Left lung (tissue), 14 donors: ENCODE measurements at regions of chrX and their contacts with region 1.

Region 1: DNA sequence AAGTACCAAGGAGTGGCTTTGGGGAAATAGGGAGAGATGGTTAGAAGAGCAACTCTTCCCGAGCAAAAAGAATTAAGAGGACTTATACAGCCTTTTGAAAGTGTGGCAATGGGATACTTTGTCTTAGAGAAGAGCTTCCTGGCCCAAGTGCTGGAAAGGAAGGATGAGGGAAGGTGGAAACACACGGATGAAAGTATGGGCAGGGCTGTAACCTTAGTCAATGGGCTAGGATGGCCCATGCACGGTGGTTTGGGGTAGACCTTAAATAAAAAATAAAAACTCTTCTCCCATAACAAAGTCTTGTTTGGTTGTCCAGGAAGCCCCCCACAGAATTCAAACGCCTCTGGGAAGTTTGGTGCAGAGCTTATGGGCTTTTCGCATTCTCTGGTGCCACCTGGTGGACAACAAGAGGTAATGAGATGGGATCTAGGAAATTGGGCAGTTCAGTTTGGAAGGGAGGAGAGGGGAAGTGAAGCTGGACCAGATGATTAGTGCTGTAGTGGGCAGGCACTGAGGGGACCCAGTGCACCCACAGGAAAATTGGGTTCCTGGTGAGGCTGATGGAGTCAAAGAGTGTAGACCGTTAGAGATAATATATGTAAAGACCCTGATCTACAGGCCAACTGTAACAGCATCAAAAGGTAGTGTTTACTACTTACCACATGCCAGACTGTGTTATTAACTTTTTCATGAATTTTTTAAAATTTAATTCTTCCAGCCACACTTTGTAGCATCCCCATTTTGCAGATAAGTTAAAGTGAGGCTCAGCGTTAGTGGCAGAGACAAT is 13.8 kb upstream of the ENOX2 start:
- DNase-seq: peak in 3 of 4 donors; percentile 32 to 51 (median 42)
- ATAC-seq: peak; percentile 84
- H3K4me3 ChIP-seq: no peak overlapping the region
- H3K27ac ChIP-seq: no peak overlapping the region
- H3K4me1 ChIP-seq: no peaks in the 10 kb centered on the region
- H3K27me3 ChIP-seq: peaks cover 0 to 4% of the 10 kb centered on the region in 2 donors
- CTCF ChIP-seq: peak; percentile 62 to 86

Region 2: DNA sequence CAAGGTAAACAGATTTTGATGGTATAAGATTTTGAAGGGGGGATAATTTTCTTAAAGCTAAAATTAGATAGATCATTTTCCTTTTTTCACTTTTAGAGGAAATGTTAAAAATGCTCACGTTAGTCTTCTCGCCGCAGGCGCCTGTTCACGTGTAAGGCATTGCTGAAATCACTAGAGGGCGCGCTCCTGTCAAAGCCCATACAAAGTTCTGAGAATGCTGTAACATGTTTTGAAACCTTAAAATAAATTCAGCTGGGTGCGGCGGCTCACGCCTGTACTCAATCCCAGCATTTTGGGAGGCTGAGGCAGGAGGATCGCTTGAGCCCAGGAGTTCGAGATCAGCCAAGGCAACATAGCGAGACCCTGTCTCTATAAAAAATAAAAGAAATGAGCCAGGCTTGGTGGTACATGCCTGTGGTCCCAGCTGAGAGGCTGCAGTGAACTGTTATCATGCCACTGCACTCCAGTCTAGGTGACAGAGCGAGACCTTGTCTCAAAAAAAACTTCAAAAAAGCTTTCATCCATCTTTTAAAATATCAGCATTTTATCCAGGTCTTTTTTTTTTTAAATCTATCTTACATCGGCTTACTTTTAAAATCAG is 377.0 kb before region 1 on chrX:
- intact Hi-C with region 1: loop called in 1 of 2 experiments (anchors 10 kb)
- DNase-seq: peak in 2 of 4 donors; percentile 4 to 26
- ATAC-seq: peak; percentile 73
- H3K4me3 ChIP-seq: no peak overlapping the region
- H3K27ac ChIP-seq: no peak overlapping the region
- H3K4me1 ChIP-seq: no peaks in the 10 kb centered on the region
- H3K27me3 ChIP-seq: no peaks in the 10 kb centered on the region
- CTCF ChIP-seq: peak; percentile 49 to 55

Region 3: GRCh38 chrX:130575831-130576389 is 340.9 kb before region 1 on chrX:
- intact Hi-C with region 1: loop called in 1 of 2 experiments (anchors 10 kb)
- DNase-seq: peak in 1 of 4 donors; percentile 20
- ATAC-seq: peak; percentile 64
- H3K4me3 ChIP-seq: no peak overlapping the region
- H3K27ac ChIP-seq: no peak overlapping the region
- H3K4me1 ChIP-seq: no peaks in the 10 kb centered on the region
- H3K27me3 ChIP-seq: no peaks in the 10 kb centered on the region
- CTCF ChIP-seq: peak; percentile 11 to 67